ENCODE measurements at regions of chr11 and their contacts with region 1.

Region 1: GRCh38 chr11:13091373-13091772 is 82.3 kb downstream of the RASSF10 start:
- DNase-seq: no peak
- H3K4me3 ChIP-seq: no peak overlapping the region
- H3K27ac ChIP-seq: no peak overlapping the region
- H3K4me1 ChIP-seq: no peaks in the 10 kb centered on the region
- H3K27me3 ChIP-seq: no peaks in the 10 kb centered on the region
- CTCF ChIP-seq: no peak
- EP300 ChIP-seq: no peak
- POLR2A ChIP-seq: no peak

Region 2: GRCh38 chr11:11502263-11502861 is 1589.0 kb before region 1 on chr11:
- in situ Hi-C with region 1: no loop called
- intact Hi-C with region 1: loop called (anchors 5 kb)
- DNase-seq: no peak
- H3K4me3 ChIP-seq: no peak overlapping the region
- H3K27ac ChIP-seq: peak overlapping the region; percentile 46 to 72 (median 59)
- H3K4me1 ChIP-seq: peaks cover 15 to 40% (median 27%) of the 10 kb centered on the region in 4 donors
- H3K27me3 ChIP-seq: no peaks in the 10 kb centered on the region
- CTCF ChIP-seq: no peak
- EP300 ChIP-seq: no peak
- POLR2A ChIP-seq: no peak

Region 3: GRCh38 chr11:12540913-12541582 is 550.3 kb before region 1 on chr11:
- in situ Hi-C with region 1: no loop called
- intact Hi-C with region 1: no loop called
- DNase-seq: no peak
- H3K4me3 ChIP-seq: no peak overlapping the region
- H3K27ac ChIP-seq: peak overlapping the region; percentile 53 to 79 (median 75)
- H3K4me1 ChIP-seq: peaks cover 12 to 22% (median 18%) of the 10 kb centered on the region in 4 donors
- H3K27me3 ChIP-seq: no peaks in the 10 kb centered on the region
- CTCF ChIP-seq: peak in 1 of 5 experiments; percentile 38
- EP300 ChIP-seq: no peak
- POLR2A ChIP-seq: no peak

Region 4: DNA sequence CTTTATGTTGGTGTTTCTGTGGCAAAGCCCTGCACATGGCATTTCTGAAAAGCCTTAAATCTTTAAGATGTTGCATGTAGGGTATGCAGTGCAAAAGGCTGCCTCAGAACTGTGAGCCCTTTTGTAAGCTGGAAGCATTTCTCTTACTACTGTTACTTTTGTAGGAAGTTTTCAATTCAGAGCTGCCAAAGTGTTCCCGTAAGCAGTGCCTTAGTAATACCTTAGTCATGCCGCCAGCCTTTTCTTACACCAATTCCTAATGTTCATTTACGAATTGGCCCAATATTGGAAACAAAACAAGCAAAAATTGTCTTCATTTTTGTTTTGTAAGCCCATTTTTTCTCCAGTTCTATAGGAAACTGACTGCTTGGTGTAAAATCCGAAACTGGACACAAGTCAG is 149.7 kb before region 1 on chr11:
- in situ Hi-C with region 1: no loop called
- intact Hi-C with region 1: no loop called
- DNase-seq: no peak
- H3K4me3 ChIP-seq: no peak overlapping the region
- H3K27ac ChIP-seq: no peak overlapping the region
- H3K4me1 ChIP-seq: no peaks in the 10 kb centered on the region
- H3K27me3 ChIP-seq: no peaks in the 10 kb centered on the region
- CTCF ChIP-seq: no peak
- EP300 ChIP-seq: no peak
- POLR2A ChIP-seq: no peak

Measured in transverse colon (tissue), 4 donors.